Sigmoid colon (tissue), 7 donors: ENCODE measurements at regions of chr2 and their contacts with region 1.

Region 1: GRCh38 chr2:64609227-64609941 is 44.3 kb downstream of the SERTAD2 start:
- DNase-seq: peak; percentile 77
- H3K4me3 ChIP-seq: peak overlapping the region; percentile 39 to 62 (median 54)
- H3K27ac ChIP-seq: peak overlapping the region; percentile 60 to 77 (median 69)
- H3K4me1 ChIP-seq: peaks cover 0 to 16% (median 12%) of the 10 kb centered on the region in 4 donors
- H3K27me3 ChIP-seq: no peaks in the 10 kb centered on the region
- CTCF ChIP-seq: peak in 2 of 4 experiments; percentile 19 to 39
- EP300 ChIP-seq: no peak
- POLR2A ChIP-seq: no peak

Region 2: DNA sequence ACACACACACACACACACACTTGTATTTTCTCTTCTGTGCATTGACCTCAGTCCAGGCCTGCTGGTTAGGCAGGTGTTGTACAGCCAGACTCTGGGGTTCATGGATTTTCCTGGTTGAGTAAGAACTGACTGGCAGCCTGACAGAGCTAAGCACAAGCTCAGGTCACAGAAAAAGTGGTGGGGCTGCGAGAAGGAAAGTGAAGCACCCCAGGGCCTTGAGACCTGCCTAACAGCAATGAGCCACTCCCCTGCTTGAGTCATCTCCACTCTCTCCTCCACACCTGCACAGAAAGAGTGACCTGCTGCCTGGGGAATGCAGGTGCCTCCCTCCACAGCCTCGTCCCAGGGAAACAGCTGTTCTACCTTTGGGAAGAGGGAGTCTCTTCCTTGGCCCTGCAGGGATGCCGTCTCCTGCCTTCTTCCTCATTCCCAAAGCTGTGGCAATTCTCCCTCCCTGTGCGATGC is 246.8 kb before region 1 on chr2:
- intact Hi-C with region 1: no loop called
- DNase-seq: no peak
- H3K4me3 ChIP-seq: no peak overlapping the region
- H3K27ac ChIP-seq: no peak overlapping the region
- H3K4me1 ChIP-seq: peaks cover 0 to 12% (median 10%) of the 10 kb centered on the region in 4 donors
- H3K27me3 ChIP-seq: no peaks in the 10 kb centered on the region
- CTCF ChIP-seq: no peak
- EP300 ChIP-seq: no peak
- POLR2A ChIP-seq: no peak

Region 3: GRCh38 chr2:64644177-64645004 is 35.0 kb after region 1 on chr2:
- intact Hi-C with region 1: loop called (anchors 2 kb)
- DNase-seq: peak; percentile 92
- H3K4me3 ChIP-seq: peak overlapping the region; percentile 31 to 52 (median 46)
- H3K27ac ChIP-seq: peak overlapping the region; percentile 90 to 93 (median 91)
- H3K4me1 ChIP-seq: peaks cover 0 to 68% (median 57%) of the 10 kb centered on the region in 4 donors
- H3K27me3 ChIP-seq: no peaks in the 10 kb centered on the region
- CTCF ChIP-seq: no peak
- EP300 ChIP-seq: no peak
- POLR2A ChIP-seq: peak; percentile 77 to 91

Region 4: GRCh38 chr2:64865073-64865830 is 255.9 kb after region 1 on chr2:
- intact Hi-C with region 1: loop called (anchors 1 kb)
- DNase-seq: peak; percentile 84
- H3K4me3 ChIP-seq: peak overlapping the region; percentile 60 to 67 (median 64)
- H3K27ac ChIP-seq: peak overlapping the region; percentile 86 to 93 (median 90)
- H3K4me1 ChIP-seq: peaks cover 0 to 20% (median 15%) of the 10 kb centered on the region in 4 donors
- H3K27me3 ChIP-seq: no peaks in the 10 kb centered on the region
- CTCF ChIP-seq: peak in 2 of 4 experiments; percentile 24 to 67
- EP300 ChIP-seq: no peak
- POLR2A ChIP-seq: no peak